Heart left ventricle (tissue), 16 donors: ENCODE measurements at regions of chr17 and their contacts with region 1.

Region 1: DNA sequence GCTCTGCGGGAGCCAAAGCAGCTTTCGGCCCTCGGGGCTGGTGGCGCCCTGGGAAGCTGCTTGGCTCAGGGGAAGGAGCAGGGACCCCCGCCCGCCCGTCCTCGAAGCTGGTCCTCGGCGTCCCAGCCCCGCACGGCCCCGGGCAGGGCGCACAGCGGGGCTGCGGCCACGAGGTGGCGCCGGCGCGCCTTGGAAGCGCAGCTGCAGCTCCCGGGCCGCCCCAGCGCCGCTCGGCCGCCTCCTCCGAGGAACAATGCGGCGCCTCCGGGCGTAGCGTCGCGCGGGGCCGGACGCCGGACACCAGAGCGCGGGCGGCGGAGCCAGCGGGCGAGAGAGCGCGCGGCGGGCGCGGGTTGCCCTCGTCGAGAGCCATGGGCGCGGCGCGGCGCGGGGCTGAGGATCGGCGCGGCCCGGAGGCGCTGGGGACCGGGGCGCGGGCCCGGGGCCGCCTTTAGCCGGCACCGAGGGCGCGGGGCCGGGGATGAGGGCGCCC is at the start of gene MGAT5B:
- DNase-seq: peak; percentile 73 to 90 (median 83)
- ATAC-seq: peak; percentile 74 to 97 (median 90)
- H3K4me3 ChIP-seq: peak within 1 kb of the TSS in 9 of 12 donors; percentile 3 to 53 (median 40)
- H3K27ac ChIP-seq: no peak within 1 kb of the TSS
- H3K4me1 ChIP-seq: peaks cover 0 to 26% (median 8%) of the 10 kb centered on the region in 12 donors
- H3K27me3 ChIP-seq: peaks cover 15 to 49% (median 32%) of the 10 kb centered on the region in 9 donors
- CTCF ChIP-seq: peak; percentile 44 to 97 (median 86)
- POLR2A ChIP-seq: no peak
- total RNA-seq, gene MGAT5B: 0.13 to 0.21 (median 0.15) TPM in 4 of 9 donors, not detected in the others

Region 2: GRCh38 chr17:76924345-76925342 is 56.4 kb after region 1 on chr17:
- intact Hi-C with region 1: no loop called
- DNase-seq: no peak
- ATAC-seq: no peak
- H3K4me3 ChIP-seq: no peak overlapping the region
- H3K27ac ChIP-seq: no peak overlapping the region
- H3K4me1 ChIP-seq: peaks cover 0 to 6% (median 0%) of the 10 kb centered on the region in 12 donors
- H3K27me3 ChIP-seq: peaks cover 0 to 38% (median 12%) of the 10 kb centered on the region in 9 donors
- CTCF ChIP-seq: no peak
- POLR2A ChIP-seq: no peak

Region 3: GRCh38 chr17:77054936-77055335 is 186.7 kb after region 1 on chr17:
- intact Hi-C with region 1: loop called in 9 of 10 experiments (anchors 1 to 5 kb)
- DNase-seq: peak in 1 of 5 donors; percentile 22
- ATAC-seq: no peak
- H3K4me3 ChIP-seq: no peak overlapping the region
- H3K27ac ChIP-seq: no peak overlapping the region
- H3K4me1 ChIP-seq: no peaks in the 10 kb centered on the region
- H3K27me3 ChIP-seq: peaks cover 4 to 89% (median 29%) of the 10 kb centered on the region in 9 donors
- CTCF ChIP-seq: no peak
- POLR2A ChIP-seq: no peak

Region 4: DNA sequence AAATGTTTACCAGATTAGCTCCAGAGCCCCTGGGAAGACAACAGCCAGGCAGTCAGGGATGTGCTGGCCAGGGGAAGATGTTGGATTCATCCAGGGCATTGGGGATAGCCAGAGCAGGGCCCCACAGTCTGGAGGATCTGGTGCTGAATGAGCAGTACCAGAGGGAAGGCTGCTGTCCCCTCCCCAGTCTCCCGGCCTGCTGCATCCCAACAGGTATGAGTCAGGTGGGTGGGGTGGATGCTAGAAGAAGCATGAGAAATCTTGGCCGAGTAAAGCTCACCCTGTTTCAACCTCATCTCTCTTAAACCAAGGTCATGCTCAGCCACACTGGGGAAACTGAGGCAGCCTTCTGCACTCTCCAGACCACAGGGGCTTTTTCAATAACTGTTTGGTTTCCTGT is 200.7 kb after region 1 on chr17:
- intact Hi-C with region 1: loop called in 2 of 10 experiments (anchors 2 to 5 kb)
- DNase-seq: no peak
- ATAC-seq: no peak
- H3K4me3 ChIP-seq: no peak overlapping the region
- H3K27ac ChIP-seq: no peak overlapping the region
- H3K4me1 ChIP-seq: peaks cover 0 to 4% (median 0%) of the 10 kb centered on the region in 12 donors
- H3K27me3 ChIP-seq: peaks cover 0 to 48% (median 7%) of the 10 kb centered on the region in 9 donors
- CTCF ChIP-seq: no peak
- POLR2A ChIP-seq: no peak

Region 5: GRCh38 chr17:77247048-77247541 is 378.9 kb after region 1 on chr17:
- intact Hi-C with region 1: loop called in 5 of 10 experiments (anchors 2 to 10 kb)
- DNase-seq: peak; percentile 83 to 94 (median 86)
- ATAC-seq: peak; percentile 77 to 95 (median 91)
- H3K4me3 ChIP-seq: peak overlapping the region; percentile 39 to 88 (median 69)
- H3K27ac ChIP-seq: peak overlapping the region in 8 of 12 donors; percentile 11 to 79 (median 58)
- H3K4me1 ChIP-seq: peaks cover 0 to 29% (median 12%) of the 10 kb centered on the region in 12 donors
- H3K27me3 ChIP-seq: peaks cover 0 to 7% (median 0%) of the 10 kb centered on the region in 9 donors
- CTCF ChIP-seq: peak; percentile 95 to 100 (median 99)
- POLR2A ChIP-seq: peak in 1 of 2 donors; percentile 31

Region 6: DNA sequence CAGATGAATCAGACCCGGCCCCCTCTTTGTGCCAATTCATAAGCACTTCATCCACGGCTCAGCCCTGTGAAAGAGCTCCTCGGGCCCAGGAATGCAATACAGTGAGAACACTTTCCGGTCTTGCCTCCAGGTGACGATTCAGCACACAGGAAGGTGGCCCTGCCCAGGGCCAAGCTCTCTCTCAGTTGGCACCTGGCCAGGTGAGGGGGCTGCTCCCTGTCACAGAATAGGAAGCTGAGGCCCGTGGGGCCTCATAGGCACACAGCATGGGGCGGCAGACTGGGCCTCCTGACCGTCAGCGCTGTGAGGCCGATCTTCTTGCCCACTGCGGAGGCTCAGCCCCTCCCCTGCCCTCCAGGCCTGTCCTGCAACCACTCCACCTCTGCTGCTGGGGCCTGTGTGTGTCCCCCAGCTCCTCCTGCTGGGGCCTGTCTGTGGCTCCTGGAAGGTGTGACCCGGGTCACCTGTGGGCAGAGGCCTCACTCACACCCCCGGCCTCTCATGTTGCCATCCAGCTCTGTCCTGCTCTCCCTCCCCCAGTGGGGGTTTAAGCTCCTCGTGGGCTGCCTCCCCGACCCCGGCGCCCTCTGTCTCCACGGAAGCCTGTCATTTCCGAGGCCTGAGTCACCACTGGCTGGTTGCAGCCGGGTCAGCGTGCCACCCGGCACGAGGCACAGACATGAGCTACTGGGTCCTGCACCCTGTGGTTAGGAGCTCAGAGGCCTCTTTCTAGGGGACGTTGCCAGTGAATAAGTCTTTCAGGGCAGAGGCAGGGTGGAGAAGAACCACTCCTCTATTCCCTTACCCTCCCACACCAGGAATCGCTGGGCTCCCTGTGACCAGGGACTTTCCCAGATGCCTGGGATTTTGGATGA is 387.0 kb after region 1 on chr17:
- intact Hi-C with region 1: loop called in 2 of 10 experiments (anchors 10 kb)
- DNase-seq: no peak
- ATAC-seq: peak; percentile 32 to 61 (median 42)
- H3K4me3 ChIP-seq: no peak overlapping the region
- H3K27ac ChIP-seq: peak overlapping the region in 1 of 12 donors; percentile 29
- H3K4me1 ChIP-seq: no peaks in the 10 kb centered on the region
- H3K27me3 ChIP-seq: peaks cover 0 to 5% (median 0%) of the 10 kb centered on the region in 9 donors
- CTCF ChIP-seq: no peak
- POLR2A ChIP-seq: no peak

Region 7: DNA sequence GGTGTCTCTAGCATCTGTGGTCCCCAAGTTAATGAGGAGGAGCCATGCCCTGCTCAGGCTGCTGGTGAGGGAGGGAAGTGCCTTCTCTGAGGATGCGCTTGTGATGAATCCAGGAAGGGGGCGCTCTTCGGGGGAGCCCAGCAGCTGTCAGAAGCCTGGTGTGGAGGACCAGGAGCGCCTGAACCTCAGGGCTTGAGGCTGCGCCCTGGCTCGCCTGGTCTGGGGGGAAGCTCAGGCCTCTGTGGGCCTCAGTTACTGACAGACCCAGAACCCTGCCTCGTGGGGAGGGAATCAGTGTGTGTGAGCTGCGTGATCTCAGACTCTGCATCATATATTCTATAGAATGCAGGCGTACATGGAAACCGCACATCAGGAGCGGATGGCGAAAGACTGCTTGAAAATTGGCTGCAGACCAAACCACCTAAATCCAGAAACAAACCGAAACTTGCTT is 398.7 kb after region 1 on chr17:
- intact Hi-C with region 1: loop called in 1 of 10 experiments (anchors 10 kb)
- DNase-seq: no peak
- ATAC-seq: no peak
- H3K4me3 ChIP-seq: no peak overlapping the region
- H3K27ac ChIP-seq: no peak overlapping the region
- H3K4me1 ChIP-seq: no peaks in the 10 kb centered on the region
- H3K27me3 ChIP-seq: peaks cover 0 to 4% (median 0%) of the 10 kb centered on the region in 9 donors
- CTCF ChIP-seq: no peak
- POLR2A ChIP-seq: no peak